ENCODE measurements at regions of chr7 and their contacts with region 1.

Region 1: GRCh38 chr7:74289018-74289658 is at the start of gene CLIP2:
- DNase-seq: peak; percentile 89
- H3K4me3 ChIP-seq: peak within 1 kb of the TSS; percentile 94
- H3K27ac ChIP-seq: peak within 1 kb of the TSS; percentile 70
- H3K4me1 ChIP-seq: peaks cover 36% of the 10 kb centered on the region
- H3K27me3 ChIP-seq: no peaks in the 10 kb centered on the region
- CTCF ChIP-seq: no peak
- total RNA-seq, gene CLIP2: 28.9 and 33.3 TPM in 2 replicates

Region 2: DNA sequence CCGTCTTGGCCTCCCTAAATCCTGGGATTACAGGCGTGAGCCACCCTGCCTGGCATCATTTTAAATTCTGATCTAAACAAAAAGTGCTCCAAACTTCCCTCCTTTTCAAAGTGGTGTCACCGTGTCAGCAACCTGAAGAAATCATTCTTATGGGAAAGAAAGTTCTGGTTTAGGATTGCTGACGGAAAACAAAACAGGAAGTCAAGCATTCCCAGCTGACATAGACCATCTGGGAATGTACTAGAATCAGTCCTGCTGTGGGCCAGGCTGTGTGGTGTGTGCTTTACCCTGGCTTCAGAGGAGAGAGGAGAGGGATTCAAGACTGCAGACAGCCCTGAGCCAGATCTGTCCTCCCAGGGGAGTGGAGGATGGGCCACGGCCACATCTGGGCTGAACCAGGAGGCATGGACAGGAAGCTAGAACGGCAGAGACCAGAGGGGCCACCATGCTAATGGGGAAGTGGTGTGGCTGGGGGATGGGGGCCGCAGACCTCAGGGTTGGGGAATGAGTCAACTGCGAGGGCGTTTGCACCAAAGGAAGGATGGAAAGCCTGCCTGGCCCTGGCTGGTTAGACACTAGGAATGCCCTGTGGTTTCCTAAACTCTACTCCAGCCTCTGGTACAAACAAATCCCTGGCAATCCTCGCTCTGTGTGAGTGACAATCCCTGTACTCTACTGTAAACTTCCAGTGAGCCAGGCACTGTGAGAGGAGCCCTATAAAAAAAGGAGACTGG is 16.7 kb before region 1 on chr7:
- CTCF ChIA-PET with region 1: interaction called, 6 read pairs
- POLR2A ChIA-PET with region 1: interaction called, 11 read pairs
- intact Hi-C with region 1: loop called (anchors 1 kb)
- DNase-seq: no peak
- H3K4me3 ChIP-seq: no peak overlapping the region
- H3K27ac ChIP-seq: peak overlapping the region; percentile 55
- H3K4me1 ChIP-seq: peaks cover 8% of the 10 kb centered on the region
- H3K27me3 ChIP-seq: no peaks in the 10 kb centered on the region
- CTCF ChIP-seq: no peak

Region 3: DNA sequence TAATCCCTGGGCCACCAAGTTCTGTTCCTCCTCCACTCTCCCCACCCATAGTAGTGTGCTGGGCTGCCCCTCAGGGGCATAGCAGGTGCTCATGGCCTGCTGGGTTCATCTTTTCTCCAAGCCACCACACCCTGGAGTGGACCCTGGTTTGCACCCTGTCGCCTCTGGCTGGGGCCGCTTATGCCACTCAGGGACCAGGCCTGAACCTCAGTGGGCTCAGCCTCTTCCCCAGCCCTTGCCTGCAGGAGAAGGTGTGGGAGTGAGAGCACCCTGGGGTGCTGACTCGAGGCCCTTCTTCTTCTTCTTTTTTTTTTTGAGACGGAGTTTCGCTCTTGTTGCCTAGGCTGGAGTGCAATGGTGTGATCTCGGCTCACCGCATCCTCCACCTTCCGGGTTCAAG is 10.3 kb after region 1 on chr7:
- CTCF ChIA-PET with region 1: no interaction called
- POLR2A ChIA-PET with region 1: interaction called, 17 read pairs
- intact Hi-C with region 1: no loop called
- DNase-seq: no peak
- H3K4me3 ChIP-seq: no peak overlapping the region
- H3K27ac ChIP-seq: no peak overlapping the region
- H3K4me1 ChIP-seq: peaks cover 6% of the 10 kb centered on the region
- H3K27me3 ChIP-seq: no peaks in the 10 kb centered on the region
- CTCF ChIP-seq: no peak

Region 4: GRCh38 chr7:74371381-74372341 is 82.5 kb after region 1 on chr7:
- CTCF ChIA-PET with region 1: no interaction called
- POLR2A ChIA-PET with region 1: no interaction called
- intact Hi-C with region 1: loop called (anchors 5 kb)
- DNase-seq: peak; percentile 45
- H3K4me3 ChIP-seq: no peak overlapping the region
- H3K27ac ChIP-seq: peak overlapping the region; percentile 25
- H3K4me1 ChIP-seq: peaks cover 5% of the 10 kb centered on the region
- H3K27me3 ChIP-seq: no peaks in the 10 kb centered on the region
- CTCF ChIP-seq: no peak